Common myeloid progenitor, CD34-positive (primary cell): ENCODE measurements at regions of chr15 and their contacts with region 1.

Region 1: GRCh38 chr15:59917504-59918157 is 86.5 kb upstream of the FOXB1 start:
- DNase-seq: peak; percentile 61 to 69 (median 62)
- H3K4me3 ChIP-seq: no peak overlapping the region
- H3K27ac ChIP-seq: no peak overlapping the region
- H3K4me1 ChIP-seq: peaks cover 0 to 5% (median 3%) of the 10 kb centered on the region in 4 experiments
- H3K27me3 ChIP-seq: peaks cover 0 to 10% (median 2%) of the 10 kb centered on the region in 5 experiments

Region 2: GRCh38 chr15:59892995-59893394 is 24.6 kb before region 1 on chr15:
- CTCF ChIA-PET with region 1: no interaction called
- POLR2A ChIA-PET with region 1: no interaction called
- DNase-seq: peak in 2 of 3 donors; percentile 14 to 20
- H3K4me3 ChIP-seq: no peak overlapping the region
- H3K27ac ChIP-seq: no peak overlapping the region
- H3K4me1 ChIP-seq: no peaks in the 10 kb centered on the region
- H3K27me3 ChIP-seq: peaks cover 0 to 6% (median 0%) of the 10 kb centered on the region in 5 experiments

Region 3: GRCh38 chr15:59931646-59932261 is 14.1 kb after region 1 on chr15:
- CTCF ChIA-PET with region 1: interaction called, 13 read pairs
- POLR2A ChIA-PET with region 1: no interaction called
- DNase-seq: no peak
- H3K4me3 ChIP-seq: no peak overlapping the region
- H3K27ac ChIP-seq: no peak overlapping the region
- H3K4me1 ChIP-seq: peaks cover 0 to 3% (median 0%) of the 10 kb centered on the region in 4 experiments
- H3K27me3 ChIP-seq: no peaks in the 10 kb centered on the region

Region 4: DNA sequence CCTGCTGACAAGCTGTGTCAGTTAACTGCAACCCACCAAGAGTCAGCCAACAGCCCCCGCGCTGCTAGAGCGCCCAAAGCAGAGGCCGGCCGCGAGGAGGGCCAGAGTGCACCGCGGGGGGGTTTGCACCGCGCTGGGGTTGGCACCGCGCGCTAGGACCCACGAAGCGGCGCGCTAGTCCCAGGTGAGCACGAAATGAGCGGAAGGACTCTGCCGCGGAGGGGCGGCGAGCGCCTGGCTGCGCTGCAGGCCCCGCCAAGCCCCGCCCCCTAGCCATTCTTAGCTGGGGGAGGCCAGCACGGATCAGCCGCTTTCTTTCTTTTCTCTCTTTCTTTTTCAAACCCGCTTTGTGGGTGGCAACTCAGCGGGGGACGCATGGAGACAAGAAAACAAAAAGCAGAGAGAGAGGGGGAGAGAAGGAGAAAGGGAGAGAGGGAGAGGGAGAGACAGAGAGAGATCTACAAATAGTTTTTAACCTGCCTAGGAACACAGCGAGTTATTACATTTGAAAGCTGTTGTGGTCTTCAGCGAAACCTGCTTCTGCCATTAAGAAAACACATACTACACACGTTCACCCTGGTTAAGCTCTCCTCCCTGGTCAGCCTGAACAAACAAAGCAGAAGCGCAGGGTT is 79.6 kb after region 1 on chr15:
- CTCF ChIA-PET with region 1: interaction called, 41 read pairs
- POLR2A ChIA-PET with region 1: no interaction called
- DNase-seq: peak in 1 of 3 donors; percentile 54
- H3K4me3 ChIP-seq: peak overlapping the region in 3 of 7 experiments; percentile 11 to 51 (median 17)
- H3K27ac ChIP-seq: no peak overlapping the region
- H3K4me1 ChIP-seq: peaks cover 2 to 42% (median 27%) of the 10 kb centered on the region in 4 experiments
- H3K27me3 ChIP-seq: peaks cover 22 to 96% (median 72%) of the 10 kb centered on the region in 5 experiments

Region 5: DNA sequence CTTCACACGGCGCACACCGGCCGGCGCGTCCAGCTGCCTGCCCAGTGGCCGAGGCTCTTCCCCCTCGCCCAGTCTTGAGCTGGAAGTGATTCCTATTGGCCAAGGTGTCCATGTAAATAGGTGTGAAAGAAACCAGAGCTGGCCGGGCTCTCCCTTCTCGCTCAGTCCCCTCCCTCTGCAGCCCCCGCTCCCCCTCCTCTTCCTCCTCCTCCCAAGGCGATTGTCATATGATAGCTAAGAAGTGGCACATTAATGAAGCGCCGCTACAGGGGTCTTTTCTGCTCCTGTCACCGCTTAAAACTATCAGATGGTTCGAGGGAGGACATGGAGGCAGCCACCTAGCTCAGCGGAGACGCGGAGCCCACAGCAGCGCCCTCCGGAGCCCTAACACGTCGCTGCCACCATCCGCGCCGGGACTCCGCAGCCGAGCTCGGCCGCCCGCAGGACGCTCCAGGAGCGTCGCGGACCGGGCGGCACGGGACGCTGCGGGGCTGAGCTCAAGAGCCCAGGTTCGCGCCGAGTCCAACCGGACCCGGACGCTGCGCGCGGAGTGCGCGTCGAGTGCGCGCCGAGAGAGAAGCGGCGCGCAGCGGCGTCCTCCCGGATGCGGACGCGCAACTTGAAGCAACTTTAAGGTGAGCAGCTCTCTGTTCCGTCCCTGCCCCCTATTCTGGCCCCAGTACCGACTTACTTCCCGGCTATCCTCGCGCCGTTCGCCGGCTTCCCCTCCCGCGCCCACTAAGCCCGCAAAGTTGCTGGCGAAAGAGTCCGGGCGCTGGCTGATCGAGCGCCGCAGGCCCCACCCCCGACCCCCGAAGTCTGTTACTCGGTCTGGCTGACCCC is 86.6 kb after region 1 on chr15 and contains the start of gene FOXB1:
- CTCF ChIA-PET with region 1: interaction called, 26 read pairs
- POLR2A ChIA-PET with region 1: no interaction called
- DNase-seq: peak in 1 of 3 donors; percentile 54
- H3K4me3 ChIP-seq: peak within 1 kb of the TSS; percentile 10 to 79 (median 64)
- H3K27ac ChIP-seq: no peak within 1 kb of the TSS
- H3K4me1 ChIP-seq: peaks cover 0 to 39% (median 31%) of the 10 kb centered on the region in 4 experiments
- H3K27me3 ChIP-seq: peaks cover 15 to 99% (median 60%) of the 10 kb centered on the region in 5 experiments

Region 6: GRCh38 chr15:60326824-60327654 is 409.4 kb after region 1 on chr15:
- CTCF ChIA-PET with region 1: interaction called, 43 read pairs
- POLR2A ChIA-PET with region 1: no interaction called
- DNase-seq: peak; percentile 60 to 83 (median 72)
- H3K4me3 ChIP-seq: no peak overlapping the region
- H3K27ac ChIP-seq: no peak overlapping the region
- H3K4me1 ChIP-seq: no peaks in the 10 kb centered on the region
- H3K27me3 ChIP-seq: peaks cover 0 to 8% (median 6%) of the 10 kb centered on the region in 5 experiments